Caco-2 (cell line): ENCODE measurements at regions of chr6 and their contacts with region 1.

Region 1: DNA sequence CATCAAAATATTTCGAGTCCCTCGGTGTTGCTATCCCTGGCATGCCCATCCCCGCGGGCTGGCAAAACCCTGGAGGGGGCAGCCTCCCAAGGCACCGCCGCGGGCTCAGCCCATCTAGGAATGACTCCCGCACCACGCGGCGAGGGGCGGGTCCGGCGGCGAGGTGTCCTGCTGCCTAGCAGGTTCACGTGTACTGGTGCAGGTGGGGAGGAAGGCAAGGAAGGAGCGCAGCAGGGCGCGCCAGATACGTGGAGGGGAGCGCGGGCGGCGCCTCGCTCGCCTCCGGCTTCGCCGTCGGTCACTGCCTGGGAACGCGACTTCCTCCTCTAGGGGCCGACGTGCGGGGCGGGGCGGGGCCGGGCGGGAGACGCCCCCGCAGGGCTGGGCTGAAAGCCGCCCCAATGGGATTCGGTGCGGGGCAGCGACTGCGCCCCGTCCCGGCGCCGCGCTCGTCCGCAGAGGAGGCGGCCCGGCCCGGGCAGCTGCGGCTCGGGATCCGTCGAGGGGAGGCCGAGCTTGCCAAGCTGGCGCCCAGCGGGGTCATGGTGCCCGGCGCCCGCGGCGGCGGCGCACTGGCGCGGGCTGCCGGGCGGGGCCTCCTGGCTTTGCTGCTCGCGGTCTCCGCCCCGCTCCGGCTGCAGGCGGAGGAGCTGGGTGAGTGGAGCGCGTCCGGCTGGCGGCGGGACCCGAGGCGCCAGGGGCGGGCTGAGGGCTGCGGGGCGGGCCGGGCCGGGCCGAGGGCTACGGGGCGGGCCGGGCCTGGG is at the start of gene DCBLD1:
- DNase-seq: peak; percentile 85 to 89
- H3K4me3 ChIP-seq: peak within 1 kb of the TSS; percentile 91
- H3K4me3 Mint-ChIP-seq: peak within 1 kb of the TSS; percentile 80
- H3K27ac Mint-ChIP-seq: peak within 1 kb of the TSS; percentile 93
- H3K4me1 ChIP-seq: peaks cover 13% of the 10 kb centered on the region
- H3K4me1 Mint-ChIP-seq: peaks cover 22% of the 10 kb centered on the region
- H3K27me3 ChIP-seq: no peaks in the 10 kb centered on the region
- H3K27me3 Mint-ChIP-seq: no peaks in the 10 kb centered on the region
- CTCF ChIP-seq: no peak
- total RNA-seq, gene DCBLD1: 69.3 and 73.4 TPM in 2 replicates

Region 2: GRCh38 chr6:117263353-117263927 is 219.0 kb before region 1 on chr6:
- CTCF ChIA-PET with region 1: no interaction called
- POLR2A ChIA-PET with region 1: no interaction called
- intact Hi-C with region 1: no loop called
- DNase-seq: no peak
- H3K4me3 ChIP-seq: no peak overlapping the region
- H3K4me3 Mint-ChIP-seq: no peak overlapping the region
- H3K27ac Mint-ChIP-seq: no peak overlapping the region
- H3K4me1 ChIP-seq: no peaks in the 10 kb centered on the region
- H3K4me1 Mint-ChIP-seq: peaks cover 9% of the 10 kb centered on the region
- H3K27me3 ChIP-seq: peaks cover 5% of the 10 kb centered on the region
- H3K27me3 Mint-ChIP-seq: peaks cover 37% of the 10 kb centered on the region
- CTCF ChIP-seq: no peak

Region 3: DNA sequence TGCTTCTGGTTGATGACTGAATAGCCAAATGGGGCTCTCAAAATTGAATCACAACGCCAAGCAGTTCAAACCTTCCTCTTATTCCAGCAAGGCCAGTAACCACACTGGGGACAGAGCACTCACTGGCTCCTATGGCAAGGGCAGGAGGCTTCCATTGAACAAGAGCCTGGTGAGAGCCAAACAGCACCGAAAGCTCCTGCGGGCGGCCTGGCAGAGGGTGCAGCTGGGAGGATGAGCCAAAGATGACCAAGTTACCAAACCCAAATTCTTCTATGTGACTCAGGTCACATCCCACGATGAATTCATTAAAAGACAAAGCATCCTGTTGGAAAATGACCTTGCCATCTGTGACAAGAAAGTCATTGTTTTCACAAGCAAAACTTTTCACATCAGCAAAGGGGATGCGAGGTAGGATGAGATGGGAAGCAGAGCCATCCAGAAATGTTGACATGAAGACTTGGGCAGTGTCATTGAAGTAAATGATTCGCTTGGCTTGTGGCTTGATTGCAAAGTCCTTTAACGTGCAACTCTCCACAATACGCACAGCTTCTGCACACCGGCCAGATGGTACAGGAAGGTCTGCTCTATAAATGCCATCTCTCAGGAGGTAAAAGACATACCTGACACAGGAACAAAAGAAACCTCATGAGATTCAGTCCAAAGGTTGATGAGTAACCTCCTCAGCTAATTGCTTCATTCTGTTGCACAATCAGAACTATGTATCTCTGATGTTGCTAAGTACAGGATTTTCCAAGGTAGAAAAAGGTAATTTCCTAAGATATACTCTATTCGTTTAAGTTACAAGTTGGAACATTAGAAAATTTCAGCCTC is 93.0 kb before region 1 on chr6:
- CTCF ChIA-PET with region 1: no interaction called
- POLR2A ChIA-PET with region 1: no interaction called
- intact Hi-C with region 1: no loop called
- DNase-seq: peak; percentile 70
- H3K4me3 ChIP-seq: no peak overlapping the region
- H3K4me3 Mint-ChIP-seq: peak overlapping the region; percentile 11
- H3K27ac Mint-ChIP-seq: peak overlapping the region; percentile 32
- H3K4me1 ChIP-seq: peaks cover 25% of the 10 kb centered on the region
- H3K4me1 Mint-ChIP-seq: no peaks in the 10 kb centered on the region
- H3K27me3 ChIP-seq: no peaks in the 10 kb centered on the region
- H3K27me3 Mint-ChIP-seq: no peaks in the 10 kb centered on the region
- CTCF ChIP-seq: no peak

Region 4: GRCh38 chr6:117449549-117450439 is 32.6 kb before region 1 on chr6:
- CTCF ChIA-PET with region 1: interaction called, 11 read pairs
- POLR2A ChIA-PET with region 1: interaction called, 8 read pairs
- intact Hi-C with region 1: loop called (anchors 1 kb)
- DNase-seq: peak; percentile 44 to 67
- H3K4me3 ChIP-seq: no peak overlapping the region
- H3K4me3 Mint-ChIP-seq: no peak overlapping the region
- H3K27ac Mint-ChIP-seq: no peak overlapping the region
- H3K4me1 ChIP-seq: 0 out of 2 replicates have a peak, but pooled peaks cover 4% of the 10 kb centered on the region
- H3K4me1 Mint-ChIP-seq: peaks cover 14% of the 10 kb centered on the region
- H3K27me3 ChIP-seq: no peaks in the 10 kb centered on the region; the same call in 1 of the 2 replicates
- H3K27me3 Mint-ChIP-seq: peaks cover 3% of the 10 kb centered on the region
- CTCF ChIP-seq: peak; percentile 57 to 59

Region 5: DNA sequence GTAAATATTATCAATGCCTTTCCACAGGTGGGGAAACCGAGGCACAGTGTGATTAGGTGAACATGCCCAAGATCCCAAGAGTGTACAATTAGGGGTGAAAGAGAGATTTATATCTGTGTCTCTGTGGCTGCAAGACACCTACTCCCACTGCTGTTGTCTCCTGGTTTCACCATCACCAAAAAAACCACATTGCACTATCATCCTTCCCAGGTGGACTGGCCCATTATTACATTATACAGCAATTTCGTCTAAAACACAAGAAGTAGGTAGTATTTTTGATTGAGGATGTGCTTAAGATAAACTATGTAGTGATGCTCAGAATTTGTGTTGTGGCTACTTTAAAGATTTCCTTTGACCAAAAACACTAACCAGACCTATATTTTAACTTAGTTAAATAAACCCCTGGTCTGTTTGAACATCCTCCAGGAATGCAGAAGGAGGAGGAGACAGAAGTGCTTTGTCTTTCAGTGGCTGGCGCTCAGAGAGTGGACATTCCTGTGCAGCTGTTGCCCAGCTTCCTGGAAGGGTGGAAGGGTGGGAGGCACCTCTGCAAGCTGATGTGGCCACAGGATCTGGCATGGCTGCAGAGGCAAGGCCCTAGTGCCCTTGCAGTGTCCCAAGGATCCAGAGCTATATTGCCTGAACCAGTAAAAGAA is 23.9 kb after region 1 on chr6:
- CTCF ChIA-PET with region 1: interaction called, 3 read pairs
- POLR2A ChIA-PET with region 1: interaction called, 4 read pairs
- intact Hi-C with region 1: loop called (anchors 1 kb)
- DNase-seq: peak; percentile 55 to 67
- H3K4me3 ChIP-seq: no peak overlapping the region
- H3K4me3 Mint-ChIP-seq: peak overlapping the region; percentile 34
- H3K27ac Mint-ChIP-seq: peak overlapping the region; percentile 76
- H3K4me1 ChIP-seq: peaks cover 90% of the 10 kb centered on the region
- H3K4me1 Mint-ChIP-seq: peaks cover 73% of the 10 kb centered on the region
- H3K27me3 ChIP-seq: no peaks in the 10 kb centered on the region
- H3K27me3 Mint-ChIP-seq: no peaks in the 10 kb centered on the region
- CTCF ChIP-seq: no peak

Region 6: DNA sequence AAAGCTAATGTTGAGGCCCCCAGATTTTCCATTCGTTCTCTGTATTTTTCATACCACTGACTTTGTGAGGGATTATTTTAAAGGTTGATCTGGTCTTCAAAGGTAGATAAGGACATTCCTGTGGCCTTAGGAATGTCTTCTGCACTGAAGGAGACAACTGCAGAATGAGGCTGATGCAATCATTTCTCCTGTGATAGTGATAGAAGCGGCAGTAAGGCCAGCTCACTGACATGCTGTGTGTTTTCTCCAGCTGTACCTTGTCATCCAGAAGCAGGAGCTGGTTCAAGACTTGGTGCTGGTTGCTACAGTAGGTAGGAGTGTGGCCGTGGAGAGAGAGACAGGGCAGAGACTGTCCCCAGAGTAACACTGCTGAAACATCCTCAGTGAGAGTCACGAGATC is 53.9 kb after region 1 on chr6:
- CTCF ChIA-PET with region 1: interaction called, 3 read pairs
- POLR2A ChIA-PET with region 1: interaction called, 5 read pairs
- intact Hi-C with region 1: loop called (anchors 1 kb)
- DNase-seq: peak; percentile 69 to 71
- H3K4me3 ChIP-seq: no peak overlapping the region
- H3K4me3 Mint-ChIP-seq: peak overlapping the region; percentile 56
- H3K27ac Mint-ChIP-seq: peak overlapping the region; percentile 96
- H3K4me1 ChIP-seq: peaks cover 38% of the 10 kb centered on the region
- H3K4me1 Mint-ChIP-seq: peaks cover 33% of the 10 kb centered on the region
- H3K27me3 ChIP-seq: no peaks in the 10 kb centered on the region
- H3K27me3 Mint-ChIP-seq: no peaks in the 10 kb centered on the region
- CTCF ChIP-seq: no peak

Region 7: DNA sequence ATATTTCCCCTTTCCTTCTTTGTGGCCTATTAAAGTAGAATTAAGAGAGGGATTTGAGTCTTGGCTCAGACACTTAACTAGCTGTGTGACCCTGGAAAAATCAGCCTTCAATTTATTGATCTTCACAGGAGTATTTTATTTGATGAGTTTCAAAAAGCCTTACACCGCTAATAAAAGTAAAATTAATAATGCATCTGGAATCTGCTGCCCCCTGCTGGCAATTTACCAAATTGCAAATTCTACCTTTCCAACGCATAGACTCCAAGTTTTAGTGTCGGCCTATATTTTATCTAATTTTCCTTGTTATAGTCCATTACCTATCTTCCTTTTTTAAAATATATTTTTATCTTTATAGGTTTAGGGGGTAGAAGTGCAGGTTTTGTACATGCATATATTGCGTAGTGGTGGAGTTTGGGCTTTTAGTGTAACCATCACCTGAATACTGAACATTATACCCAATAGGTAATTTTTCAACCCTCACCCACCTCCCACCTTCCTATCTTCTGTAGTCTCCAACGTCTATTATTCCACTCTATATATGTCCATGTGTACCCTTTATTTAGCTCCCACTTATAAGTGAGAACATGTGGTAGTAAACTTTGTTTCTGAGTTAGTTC is 73.6 kb after region 1 on chr6:
- CTCF ChIA-PET with region 1: interaction called, 10 read pairs
- POLR2A ChIA-PET with region 1: no interaction called
- intact Hi-C with region 1: loop called (anchors 1 kb)
- DNase-seq: peak in 1 of 2 experiments; percentile 58
- H3K4me3 ChIP-seq: no peak overlapping the region
- H3K4me3 Mint-ChIP-seq: no peak overlapping the region
- H3K27ac Mint-ChIP-seq: no peak overlapping the region
- H3K4me1 ChIP-seq: peaks cover 24% of the 10 kb centered on the region
- H3K4me1 Mint-ChIP-seq: no peaks in the 10 kb centered on the region
- H3K27me3 ChIP-seq: no peaks in the 10 kb centered on the region
- H3K27me3 Mint-ChIP-seq: no peaks in the 10 kb centered on the region
- CTCF ChIP-seq: peak; percentile 60 to 82

Region 8: DNA sequence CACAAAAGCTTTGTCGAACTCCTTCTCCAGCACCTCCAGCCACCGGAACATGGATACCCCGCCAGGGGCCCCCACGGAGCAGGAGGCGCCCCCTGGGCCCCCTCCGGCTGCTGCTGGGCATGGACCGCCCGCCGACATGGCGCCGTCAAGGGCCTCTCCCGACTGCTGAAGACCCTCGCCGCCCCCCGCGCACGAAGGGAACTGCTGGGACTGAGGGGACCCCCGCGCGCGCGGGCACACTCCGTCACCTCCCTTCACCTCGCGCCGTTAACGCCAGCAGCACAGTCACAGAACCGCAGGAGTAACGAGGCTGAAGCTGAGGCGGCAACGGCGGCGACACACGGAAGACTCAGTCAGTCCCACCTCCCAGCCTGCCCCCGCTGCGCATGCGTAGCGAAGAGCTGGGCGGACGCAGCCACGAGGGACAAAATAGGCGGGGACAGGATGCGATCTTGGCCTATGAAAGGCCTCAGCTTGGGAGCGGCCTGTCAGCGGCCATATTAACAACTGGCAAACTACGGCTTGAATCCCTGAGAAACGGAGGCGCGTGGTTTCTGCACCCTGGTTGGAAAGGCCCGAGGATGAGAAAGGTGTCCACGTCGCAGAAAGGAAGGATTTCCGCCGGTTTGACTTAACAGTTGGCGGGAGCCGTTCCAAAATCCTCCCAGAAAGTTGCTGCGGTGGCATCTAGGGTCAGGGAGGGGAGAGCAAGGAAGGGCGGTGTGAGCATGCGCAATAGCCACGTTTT is 119.9 kb after region 1 on chr6 and contains the start of gene GOPC:
- CTCF ChIA-PET with region 1: interaction called, 10 read pairs
- POLR2A ChIA-PET with region 1: interaction called, 7 read pairs
- intact Hi-C with region 1: loop called (anchors 1 kb)
- DNase-seq: peak; percentile 95 to 97
- H3K4me3 ChIP-seq: peak within 1 kb of the TSS; percentile 63
- H3K4me3 Mint-ChIP-seq: peak within 1 kb of the TSS; percentile 96
- H3K27ac Mint-ChIP-seq: peak within 1 kb of the TSS; percentile 94
- H3K4me1 ChIP-seq: peaks cover 7% of the 10 kb centered on the region; the same call in 1 of the 2 replicates
- H3K4me1 Mint-ChIP-seq: no peaks in the 10 kb centered on the region
- H3K27me3 ChIP-seq: no peaks in the 10 kb centered on the region
- H3K27me3 Mint-ChIP-seq: no peaks in the 10 kb centered on the region
- CTCF ChIP-seq: peak; percentile 23 to 45
- total RNA-seq, gene GOPC: 29.0 and 29.6 TPM in 2 replicates